ENCODE measurements at regions of chr12 and their contacts with region 1.

Region 1: DNA sequence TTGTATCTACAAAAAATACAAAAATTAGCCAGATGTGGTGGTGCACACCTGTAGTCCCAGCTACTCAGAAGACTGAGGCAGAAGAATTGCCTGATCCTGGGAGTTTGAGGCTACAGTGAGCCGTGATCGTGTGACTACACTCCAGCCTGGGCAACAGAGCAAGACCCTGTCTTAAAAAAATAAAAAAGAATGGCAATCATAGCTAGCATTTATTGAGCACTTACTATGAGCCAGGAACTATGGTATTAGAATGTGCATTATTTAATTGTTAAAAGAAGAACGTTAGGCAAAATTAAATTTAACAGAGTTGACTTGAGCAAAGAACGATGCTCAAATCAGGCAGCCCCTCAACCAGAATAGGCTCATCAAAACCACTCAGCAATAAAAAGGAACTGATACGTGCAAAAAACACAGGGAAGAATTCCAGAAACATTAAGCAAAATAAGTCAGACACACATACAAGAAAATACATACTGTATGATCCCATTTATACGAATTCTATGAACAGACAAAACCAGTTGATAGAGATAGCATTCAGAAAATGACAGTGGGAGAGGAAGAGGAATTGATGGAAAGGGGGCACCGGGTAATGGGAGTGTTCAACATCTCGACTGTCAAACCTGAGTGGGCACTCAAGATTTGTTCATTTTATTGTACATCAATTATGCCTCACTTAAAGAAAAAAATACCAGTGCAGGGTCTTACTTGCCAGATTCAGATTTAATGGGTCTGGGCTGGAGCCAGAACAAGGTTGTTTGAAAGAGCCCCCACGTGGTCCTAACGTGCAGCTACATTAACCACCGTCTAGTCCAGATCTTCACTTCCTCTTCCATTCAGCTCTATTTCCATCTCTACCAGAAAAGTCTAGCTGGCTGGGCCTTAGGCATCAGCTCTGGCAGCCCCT is 8.0 kb downstream of the SCNN1A start:
- DNase-seq: peak; percentile 67
- H3K4me3 ChIP-seq: no peak overlapping the region
- H3K27ac ChIP-seq: no peak overlapping the region
- H3K4me1 ChIP-seq: peaks cover 31% of the 10 kb centered on the region
- H3K27me3 ChIP-seq: no peaks in the 10 kb centered on the region
- CTCF ChIP-seq: peak in 1 of 2 donors; percentile 49
- POLR2A ChIP-seq: no peak

Region 2: DNA sequence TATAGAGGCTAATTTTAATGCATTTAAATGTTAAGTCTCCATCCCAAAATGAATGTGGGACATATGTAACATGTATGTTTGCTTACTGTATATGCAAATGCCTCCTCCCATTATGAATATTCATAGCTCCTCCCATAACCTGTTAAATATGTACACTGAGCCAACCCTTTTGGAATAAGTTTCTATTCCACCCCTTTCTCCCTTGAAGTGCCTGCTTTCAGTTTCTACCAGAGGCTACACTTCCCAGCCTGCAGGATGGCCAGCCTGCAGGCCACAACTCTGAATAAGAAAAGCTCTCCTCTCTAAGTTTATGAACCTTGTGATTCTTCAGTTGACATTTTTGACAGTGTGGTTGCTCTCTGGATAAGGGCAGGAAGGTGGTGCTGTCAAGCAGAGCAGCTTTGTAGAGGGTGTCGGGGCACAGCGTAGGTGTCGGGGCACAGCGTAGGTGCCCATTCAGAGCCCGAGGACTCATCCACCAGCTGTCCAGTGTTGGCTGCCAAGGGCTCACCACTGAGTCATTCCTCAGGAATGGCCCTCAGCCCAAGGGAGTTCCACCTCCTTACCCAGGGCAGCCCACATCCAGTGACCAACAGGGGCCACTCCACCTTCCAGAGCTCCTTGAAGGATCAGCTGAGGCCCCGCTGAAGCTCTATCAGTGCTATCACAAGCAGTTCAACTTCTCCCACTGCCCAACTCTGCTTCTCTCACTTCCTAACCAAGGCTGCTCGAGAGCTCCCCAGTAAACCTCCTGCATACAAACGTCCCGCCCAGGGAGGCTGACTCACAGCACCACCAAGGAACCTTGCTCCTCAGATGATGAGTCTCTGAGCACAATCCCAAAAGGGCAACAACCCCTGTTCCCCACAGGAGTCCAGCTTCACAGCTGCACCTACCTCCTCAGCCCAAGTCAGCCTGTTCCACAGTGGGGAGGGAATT is 274.3 kb before region 1 on chr12:
- CTCF ChIA-PET with region 1: no interaction called
- POLR2A ChIA-PET with region 1: no interaction called
- dilution Hi-C with region 1: no loop called
- intact Hi-C with region 1: no loop called
- DNase-seq: peak; percentile 92
- H3K4me3 ChIP-seq: no peak overlapping the region
- H3K27ac ChIP-seq: peak overlapping the region; percentile 60
- H3K4me1 ChIP-seq: peaks cover 87% of the 10 kb centered on the region
- H3K27me3 ChIP-seq: no peaks in the 10 kb centered on the region
- CTCF ChIP-seq: peak in 1 of 2 donors; percentile 14
- POLR2A ChIP-seq: no peak

Region 3: DNA sequence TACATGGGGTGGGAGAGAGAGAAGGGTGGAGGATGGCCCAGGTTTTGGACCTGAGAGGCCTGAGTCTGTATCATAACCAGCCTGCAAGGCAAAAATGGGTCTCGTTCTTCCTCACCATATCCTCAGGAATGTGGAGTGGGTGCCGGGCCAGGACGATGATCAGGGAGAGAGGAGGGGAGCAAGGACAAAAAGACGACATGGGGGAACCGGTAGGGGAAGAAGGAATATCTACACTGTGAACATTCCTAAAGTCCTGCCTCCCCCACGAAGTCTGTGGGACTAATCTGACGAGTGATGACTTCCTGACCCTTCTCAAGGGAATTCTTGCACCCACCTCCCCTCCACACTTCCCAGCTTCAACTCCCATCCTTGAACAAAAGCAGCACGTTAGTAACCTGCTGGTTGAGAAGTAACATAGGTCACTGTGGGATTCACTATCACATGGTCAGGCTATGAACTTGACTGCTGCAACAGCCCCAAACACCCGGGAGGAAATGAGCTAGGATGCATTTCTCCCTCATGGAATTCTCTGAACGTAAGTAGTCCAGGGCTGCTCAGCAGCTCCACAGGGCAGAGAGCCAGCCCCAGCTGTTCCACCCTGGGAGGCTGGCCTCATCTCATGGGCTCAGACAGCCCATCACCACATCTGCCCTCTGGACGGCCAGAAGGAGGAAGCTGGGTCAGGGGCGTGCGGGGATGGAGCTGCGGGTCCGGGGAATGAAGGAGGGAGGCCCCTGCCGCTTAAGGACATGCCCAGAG is 206.0 kb before region 1 on chr12:
- CTCF ChIA-PET with region 1: no interaction called
- POLR2A ChIA-PET with region 1: no interaction called
- dilution Hi-C with region 1: no loop called
- intact Hi-C with region 1: no loop called
- DNase-seq: peak; percentile 88
- H3K4me3 ChIP-seq: no peak overlapping the region
- H3K27ac ChIP-seq: peak overlapping the region; percentile 94
- H3K4me1 ChIP-seq: peaks cover 37% of the 10 kb centered on the region
- H3K27me3 ChIP-seq: no peaks in the 10 kb centered on the region
- CTCF ChIP-seq: no peak
- POLR2A ChIP-seq: peak; percentile 52

Region 4: DNA sequence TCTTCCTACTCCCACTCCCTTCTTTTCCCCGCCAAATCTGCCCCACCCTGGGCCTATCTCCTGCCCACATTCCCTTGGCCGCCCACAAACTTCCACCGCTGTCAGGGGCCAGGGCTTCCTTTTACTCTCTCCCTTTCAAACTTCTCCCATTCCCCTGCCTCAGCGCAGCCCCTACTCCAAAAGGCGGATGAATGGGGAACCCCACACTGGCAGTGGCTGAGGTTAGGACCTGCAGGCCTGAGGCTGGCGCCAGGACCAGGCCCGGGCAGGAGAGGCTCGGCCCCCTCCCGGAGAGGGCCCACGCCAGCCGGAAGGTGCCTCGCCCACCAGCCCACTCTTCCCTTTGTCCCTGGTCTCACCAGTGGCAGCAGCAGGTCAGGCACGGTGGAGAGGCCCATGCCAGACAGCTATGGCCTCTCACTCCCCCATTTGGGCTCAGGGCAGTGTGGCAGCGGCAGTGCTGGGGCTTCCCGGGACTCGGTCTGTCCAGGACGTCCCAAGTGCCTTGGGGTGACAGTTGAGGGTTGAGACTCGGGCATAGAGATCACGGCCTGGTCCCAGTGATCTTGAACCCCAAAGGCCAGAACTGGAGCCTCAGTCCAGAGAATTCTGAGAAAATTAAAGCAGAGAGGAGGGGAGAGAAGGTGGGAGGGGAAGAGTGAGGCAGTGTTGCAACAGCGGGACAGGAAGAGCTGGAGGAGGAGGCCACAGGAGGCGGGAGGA is 25.7 kb before region 1 on chr12 and contains the start of gene TNFRSF1A:
- CTCF ChIA-PET with region 1: interaction called, 46 read pairs
- POLR2A ChIA-PET with region 1: interaction called, 13 read pairs
- dilution Hi-C with region 1: no loop called
- intact Hi-C with region 1: loop called (anchors 1 kb)
- DNase-seq: peak; percentile 70
- H3K4me3 ChIP-seq: peak within 1 kb of the TSS; percentile 89 to 98 (median 89)
- H3K27ac ChIP-seq: peak within 1 kb of the TSS; percentile 69
- H3K4me1 ChIP-seq: peaks cover 56% of the 10 kb centered on the region
- H3K27me3 ChIP-seq: no peaks in the 10 kb centered on the region
- CTCF ChIP-seq: no peak
- POLR2A ChIP-seq: peak; percentile 47
- total RNA-seq, gene TNFRSF1A: 84.0 and 98.2 TPM in 2 replicates